Activated CD4-positive, alpha-beta T cell treated with anti-CD3 and anti-CD28 coated beads, Interleukin-2, amount 10 ng/mL, durations not matched to agents 24 days and 14 days (primary cell): ENCODE measurements at regions of chr6 and their contacts with region 1.

Region 1: DNA sequence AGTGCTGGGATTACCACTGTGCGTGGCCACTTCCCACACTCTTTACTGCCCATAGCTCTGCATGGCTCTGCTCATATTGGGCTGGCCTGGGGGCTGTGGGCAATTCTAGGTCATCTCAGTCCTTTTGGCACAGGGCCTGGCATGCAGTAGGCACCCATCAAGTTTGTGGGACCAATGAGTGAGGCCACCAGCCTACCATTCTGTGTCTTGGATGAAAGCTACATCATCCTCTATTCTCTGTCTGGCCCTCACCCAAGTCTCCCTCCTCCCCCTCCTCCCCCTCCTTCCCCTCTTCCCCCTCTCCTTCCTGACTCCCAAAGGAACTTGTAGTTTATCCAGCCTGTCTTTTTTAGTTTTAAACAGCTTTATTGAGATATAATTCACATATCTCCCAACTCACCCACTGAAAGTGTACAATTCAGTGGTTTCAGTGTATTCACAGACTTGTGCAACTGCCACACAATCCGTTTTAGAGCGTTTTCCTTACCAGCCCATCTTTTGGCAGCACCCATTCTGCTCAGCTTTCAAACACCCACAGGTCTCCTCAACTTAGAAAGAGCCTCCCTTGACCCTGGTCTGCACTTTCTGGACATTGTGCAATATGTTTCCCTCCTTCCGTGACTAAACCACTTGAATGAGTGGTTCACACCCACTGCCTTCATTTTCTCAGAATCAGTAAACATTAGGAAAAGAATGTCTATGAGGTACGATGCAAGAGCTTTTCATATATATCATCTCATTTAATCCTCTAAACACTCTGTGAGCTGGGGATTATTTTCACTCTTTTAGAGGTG is 21.5 kb upstream of the MRPS18A start:
- DNase-seq: no peak
- H3K4me3 Mint-ChIP-seq: no peak overlapping the region
- H3K27ac Mint-ChIP-seq: peak overlapping the region; percentile 79
- H3K4me1 Mint-ChIP-seq: peaks cover 24% of the 10 kb centered on the region
- H3K27me3 Mint-ChIP-seq: peaks cover 36% of the 10 kb centered on the region

Region 2: DNA sequence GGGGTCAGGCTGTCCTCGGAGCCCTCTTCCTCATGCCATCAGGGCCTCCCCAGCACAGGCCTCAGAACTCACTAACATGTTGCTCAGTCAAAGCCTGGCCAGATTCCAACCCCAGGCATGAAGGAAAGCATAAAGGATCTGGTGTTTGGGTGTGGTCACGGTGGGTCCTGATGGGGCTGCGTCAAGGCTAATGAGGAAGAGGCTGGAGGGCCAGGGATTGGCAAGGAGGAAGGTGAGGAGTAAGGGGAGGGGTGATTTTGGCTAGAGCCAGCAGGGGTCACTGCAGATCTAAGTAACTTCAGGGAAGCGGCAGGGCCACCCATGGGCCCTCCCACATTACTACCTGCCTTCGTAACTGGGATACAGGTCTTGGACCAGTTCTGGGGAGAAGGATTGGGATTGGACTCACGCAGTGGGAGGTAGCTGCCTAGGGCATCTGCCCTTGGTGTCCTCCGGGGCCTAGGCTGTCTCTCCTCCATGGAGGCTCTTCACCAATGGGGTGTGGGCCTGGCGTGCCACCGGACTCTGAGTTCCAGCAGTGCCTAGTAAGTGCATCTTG is 14.8 kb after region 1 on chr6:
- intact Hi-C with region 1: loop called (anchors 2 kb)
- DNase-seq: peak; percentile 89
- H3K4me3 Mint-ChIP-seq: no peak overlapping the region
- H3K27ac Mint-ChIP-seq: no peak overlapping the region
- H3K4me1 Mint-ChIP-seq: peaks cover 22% of the 10 kb centered on the region
- H3K27me3 Mint-ChIP-seq: peaks cover 5% of the 10 kb centered on the region

Region 3: DNA sequence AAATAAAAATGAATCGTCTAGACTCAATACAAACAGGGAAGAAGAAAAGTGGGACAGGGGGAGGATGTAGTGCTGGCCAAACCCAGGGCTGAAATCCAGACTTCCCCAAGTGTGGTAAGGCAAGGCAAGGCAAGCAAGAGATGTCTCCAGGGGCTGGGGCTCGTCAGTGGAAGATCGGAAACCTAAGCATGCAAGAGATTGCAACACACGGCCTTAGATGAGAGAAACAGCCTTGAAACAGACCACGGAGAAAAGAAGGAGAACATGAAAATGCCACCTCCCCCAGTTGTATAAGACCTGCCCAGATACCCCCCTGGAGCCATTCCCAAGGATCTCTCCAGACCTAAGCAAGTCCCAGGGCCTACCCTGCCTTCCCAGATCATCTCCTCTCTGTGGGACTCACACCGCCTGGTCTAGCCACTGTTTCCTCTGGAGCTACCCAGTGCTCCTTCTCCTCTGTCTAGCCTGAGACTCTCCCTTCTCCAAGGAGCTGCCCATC is 81.0 kb after region 1 on chr6:
- intact Hi-C with region 1: no loop called
- DNase-seq: no peak
- H3K4me3 Mint-ChIP-seq: no peak overlapping the region
- H3K27ac Mint-ChIP-seq: no peak overlapping the region
- H3K4me1 Mint-ChIP-seq: no peaks in the 10 kb centered on the region
- H3K27me3 Mint-ChIP-seq: peaks cover 1% of the 10 kb centered on the region